ENCODE measurements at regions of chr1 and their contacts with region 1.

Region 1: DNA sequence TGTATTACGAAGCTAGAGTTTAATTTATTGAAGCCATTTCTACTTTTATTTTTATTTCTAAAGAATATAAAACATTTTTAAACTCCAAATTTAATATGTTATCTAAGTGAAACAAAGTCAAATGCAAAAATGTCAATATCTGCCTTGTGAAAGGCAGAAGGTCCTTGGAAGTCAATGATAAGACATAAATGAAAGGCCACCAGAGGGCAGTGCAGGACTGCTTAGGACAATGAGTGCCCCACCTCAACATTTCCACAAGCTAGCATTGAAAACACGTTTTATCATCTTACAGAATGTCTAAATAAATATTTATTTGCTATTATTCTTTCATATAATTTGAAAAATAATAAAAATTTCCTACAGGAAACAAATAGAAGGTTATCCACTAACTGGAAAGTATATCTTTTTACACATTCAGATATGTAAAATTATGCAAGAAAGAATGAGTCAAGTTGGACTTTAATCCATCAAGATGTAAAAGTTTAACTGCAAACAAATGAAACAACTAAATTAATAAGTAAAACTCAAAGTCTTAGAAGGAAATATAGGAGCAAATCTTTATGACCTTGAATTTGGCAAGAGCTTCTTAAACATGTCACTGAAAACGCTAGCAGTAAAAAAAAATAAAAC is 140.1 kb upstream of the FMN2 start:
- DNase-seq: peak; percentile 58
- H3K4me3 Mint-ChIP-seq: no peak overlapping the region
- H3K27ac Mint-ChIP-seq: no peak overlapping the region
- H3K4me1 Mint-ChIP-seq: no peaks in the 10 kb centered on the region
- H3K27me3 Mint-ChIP-seq: peaks cover 2% of the 10 kb centered on the region

Region 2: DNA sequence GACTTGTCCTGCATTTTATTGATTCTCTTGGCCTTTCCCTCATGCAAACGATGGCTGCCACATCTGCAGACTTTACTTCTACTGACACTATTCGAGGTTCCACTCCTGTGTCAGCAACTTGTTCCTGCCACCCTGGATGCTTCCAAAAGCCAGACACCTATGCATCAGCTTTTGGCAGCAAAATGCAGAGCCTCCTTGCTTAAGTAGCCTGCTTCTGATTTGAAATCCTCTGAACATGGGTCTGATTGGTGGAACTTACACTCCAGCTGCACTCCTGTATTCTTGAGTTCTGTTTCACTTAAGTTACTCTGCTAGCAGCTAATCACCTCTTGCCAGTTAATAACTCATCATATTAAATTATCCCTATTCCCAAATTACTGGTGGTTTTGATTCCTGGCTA is 12.0 kb before region 1 on chr1:
- CTCF ChIA-PET with region 1: interaction called, 20 read pairs
- POLR2A ChIA-PET with region 1: no interaction called
- intact Hi-C with region 1: no loop called
- DNase-seq: no peak
- H3K4me3 Mint-ChIP-seq: no peak overlapping the region
- H3K27ac Mint-ChIP-seq: no peak overlapping the region
- H3K4me1 Mint-ChIP-seq: no peaks in the 10 kb centered on the region
- H3K27me3 Mint-ChIP-seq: no peaks in the 10 kb centered on the region

Region 3: DNA sequence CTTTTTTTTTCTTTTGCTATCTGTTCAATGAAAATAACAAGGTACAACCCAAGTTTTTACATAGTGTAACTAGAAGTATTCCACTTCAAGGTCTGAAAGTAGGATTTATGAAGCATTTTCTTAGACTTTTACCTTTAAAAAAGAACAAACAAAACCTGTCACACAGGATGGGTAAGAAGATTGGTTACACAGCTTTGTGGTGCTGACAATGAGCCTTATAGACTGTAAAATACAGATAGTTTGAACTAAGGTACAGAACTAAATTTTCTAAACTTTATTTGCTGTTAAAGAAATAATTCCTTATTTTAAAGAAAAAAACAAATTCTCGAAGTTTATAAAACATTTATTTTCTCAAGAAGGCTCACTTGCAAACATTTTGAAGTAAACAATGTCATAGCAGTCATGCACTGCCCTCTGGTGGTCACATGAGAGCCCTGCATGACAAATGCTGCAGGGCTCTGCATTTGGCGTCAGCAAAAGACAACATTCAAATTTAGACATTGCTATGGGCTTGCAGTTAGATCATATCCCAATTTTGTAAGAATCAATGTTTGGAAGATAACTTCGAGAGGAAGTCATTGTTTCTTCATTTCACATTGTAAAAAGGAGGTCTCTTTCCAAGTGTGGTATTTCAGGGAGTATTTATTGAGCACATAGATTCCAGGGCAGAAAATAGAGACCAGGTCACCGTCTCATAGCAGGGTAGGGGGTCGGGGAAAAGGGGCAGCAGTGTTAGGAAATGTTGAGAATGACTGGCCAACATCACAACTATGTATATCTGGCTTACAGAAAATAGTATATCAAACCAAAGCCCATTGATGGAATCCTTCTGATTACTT is 24.7 kb after region 1 on chr1:
- CTCF ChIA-PET with region 1: interaction called, 59 read pairs
- POLR2A ChIA-PET with region 1: no interaction called
- intact Hi-C with region 1: loop called (anchors 1 kb)
- DNase-seq: peak; percentile 62
- H3K4me3 Mint-ChIP-seq: no peak overlapping the region
- H3K27ac Mint-ChIP-seq: no peak overlapping the region
- H3K4me1 Mint-ChIP-seq: no peaks in the 10 kb centered on the region
- H3K27me3 Mint-ChIP-seq: peaks cover 2% of the 10 kb centered on the region

Region 4: DNA sequence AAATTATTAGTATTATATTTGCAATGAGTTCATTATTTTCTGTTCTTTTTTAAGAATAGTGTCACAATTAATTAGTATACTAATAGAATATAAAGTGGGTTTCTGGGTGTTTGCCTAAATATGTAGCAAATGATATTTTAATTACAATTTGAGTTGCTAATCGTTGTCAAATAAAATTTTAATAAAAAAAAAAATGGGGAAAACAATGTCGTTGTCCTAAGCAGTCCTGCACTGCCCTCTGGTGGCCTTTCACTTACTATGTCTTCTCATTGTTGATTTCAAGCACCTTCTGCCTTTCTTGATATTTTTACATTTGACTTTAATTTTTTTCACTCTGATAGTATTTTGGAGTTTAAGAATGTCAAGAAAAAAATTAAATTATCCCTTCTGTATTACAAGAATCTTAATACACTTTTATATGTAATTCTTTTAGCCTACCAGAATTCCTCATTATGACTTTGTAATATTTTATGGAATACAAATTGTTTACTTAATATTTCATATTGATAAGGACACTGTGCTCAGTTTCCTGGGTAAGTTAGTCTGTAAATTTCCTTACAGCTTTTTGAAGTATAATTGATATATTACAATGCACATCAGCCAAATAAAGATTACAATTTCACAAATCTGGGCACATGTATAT is 35.6 kb after region 1 on chr1:
- CTCF ChIA-PET with region 1: interaction called, 4 read pairs
- POLR2A ChIA-PET with region 1: no interaction called
- intact Hi-C with region 1: loop called (anchors 2 kb)
- DNase-seq: peak; percentile 27
- H3K4me3 Mint-ChIP-seq: no peak overlapping the region
- H3K27ac Mint-ChIP-seq: no peak overlapping the region
- H3K4me1 Mint-ChIP-seq: no peaks in the 10 kb centered on the region
- H3K27me3 Mint-ChIP-seq: peaks cover 6% of the 10 kb centered on the region

Region 5: DNA sequence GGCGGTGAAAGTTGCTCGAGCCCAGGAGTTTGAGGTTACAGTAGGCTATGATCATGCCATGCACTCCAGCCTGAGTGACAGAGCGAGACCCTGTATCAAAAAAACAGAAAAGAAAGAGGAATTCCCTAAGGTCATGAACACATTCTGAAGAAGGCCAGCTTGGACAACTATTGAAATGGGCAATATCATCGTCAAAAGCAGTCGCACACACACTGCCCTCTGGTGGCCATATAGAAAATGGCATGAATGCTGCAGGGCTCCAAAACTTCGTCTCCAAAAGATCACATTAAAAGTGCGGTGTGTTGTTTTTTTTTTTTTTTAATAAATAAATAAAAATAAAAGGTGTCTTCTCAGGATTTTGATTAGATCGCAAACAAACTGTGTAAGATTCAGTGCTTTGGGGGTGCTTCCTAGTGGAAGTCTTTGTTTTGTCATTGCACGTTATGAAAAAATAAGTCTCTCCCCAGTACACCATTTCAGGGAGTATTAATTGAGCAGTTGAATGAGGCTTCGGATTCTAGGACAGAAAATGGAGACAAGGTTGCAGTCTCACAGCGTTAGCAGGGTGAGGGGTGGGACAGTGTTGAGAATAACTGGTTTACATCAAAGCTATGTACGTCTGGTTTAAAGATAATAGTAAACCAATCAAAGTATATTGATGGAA is 52.6 kb after region 1 on chr1:
- CTCF ChIA-PET with region 1: interaction called, 29 read pairs
- POLR2A ChIA-PET with region 1: no interaction called
- intact Hi-C with region 1: no loop called
- DNase-seq: peak; percentile 22
- H3K4me3 Mint-ChIP-seq: no peak overlapping the region
- H3K27ac Mint-ChIP-seq: no peak overlapping the region
- H3K4me1 Mint-ChIP-seq: no peaks in the 10 kb centered on the region
- H3K27me3 Mint-ChIP-seq: peaks cover 13% of the 10 kb centered on the region

Measured in activated CD4-positive, alpha-beta memory T cell treated with anti-CD3 and anti-CD28 coated beads for 36 hours (primary cell).